OCI-LY7 (cell line): ENCODE measurements at regions of chr10 and their contacts with region 1.

Region 1: GRCh38 chr10:11611248-11612020 is at the start of gene USP6NL:
- DNase-seq: peak; percentile 90
- H3K4me3 ChIP-seq: peak within 1 kb of the TSS; percentile 81
- H3K27ac ChIP-seq: peak within 1 kb of the TSS; percentile 84
- H3K4me1 ChIP-seq: peaks cover 48% of the 10 kb centered on the region
- CTCF ChIP-seq: no peak
- total RNA-seq, gene USP6NL: 33.7 and 41.7 TPM in 2 replicates

Region 2: DNA sequence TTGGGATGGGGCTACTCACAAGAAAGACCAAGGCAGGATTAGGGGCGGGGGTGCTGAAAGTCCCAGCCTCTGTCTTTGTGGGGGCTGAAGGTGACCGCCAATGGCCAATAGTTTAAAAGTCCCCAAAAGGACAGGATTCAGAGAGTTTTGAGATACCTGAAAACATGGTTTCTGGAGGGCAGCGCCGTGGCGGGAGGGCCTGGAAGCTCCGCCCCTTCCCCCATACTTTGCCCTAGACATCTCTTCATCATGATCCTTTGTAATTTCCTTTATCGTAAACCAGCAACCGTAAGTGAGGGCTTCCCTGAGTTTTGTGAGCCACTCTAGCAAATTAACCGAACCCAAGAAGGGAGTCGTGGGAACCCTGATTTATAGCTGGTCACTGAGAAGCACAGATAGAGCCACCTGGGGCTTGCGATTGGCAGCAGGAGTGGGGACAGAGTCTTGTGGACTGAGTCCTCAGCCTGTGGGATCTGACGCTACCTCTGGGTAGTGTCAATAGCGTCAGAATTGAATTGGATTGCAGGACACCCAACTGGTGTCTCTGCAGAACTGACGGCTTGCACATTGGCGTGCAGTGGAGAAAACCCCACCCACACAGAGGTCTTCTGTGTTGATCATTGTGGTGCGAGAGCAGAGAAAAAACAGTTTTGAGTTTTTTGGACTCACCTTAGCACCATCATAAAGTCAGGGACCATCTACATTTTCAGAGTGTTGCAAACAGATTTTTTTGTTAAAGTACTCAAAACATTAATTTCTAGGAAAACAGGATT is 169.2 kb before region 1 on chr10:
- CTCF ChIA-PET with region 1: no interaction called
- POLR2A ChIA-PET with region 1: no interaction called
- intact Hi-C with region 1: no loop called
- DNase-seq: no peak
- H3K4me3 ChIP-seq: no peak overlapping the region
- H3K27ac ChIP-seq: no peak overlapping the region
- H3K4me1 ChIP-seq: peaks cover 17% of the 10 kb centered on the region
- CTCF ChIP-seq: no peak

Region 3: DNA sequence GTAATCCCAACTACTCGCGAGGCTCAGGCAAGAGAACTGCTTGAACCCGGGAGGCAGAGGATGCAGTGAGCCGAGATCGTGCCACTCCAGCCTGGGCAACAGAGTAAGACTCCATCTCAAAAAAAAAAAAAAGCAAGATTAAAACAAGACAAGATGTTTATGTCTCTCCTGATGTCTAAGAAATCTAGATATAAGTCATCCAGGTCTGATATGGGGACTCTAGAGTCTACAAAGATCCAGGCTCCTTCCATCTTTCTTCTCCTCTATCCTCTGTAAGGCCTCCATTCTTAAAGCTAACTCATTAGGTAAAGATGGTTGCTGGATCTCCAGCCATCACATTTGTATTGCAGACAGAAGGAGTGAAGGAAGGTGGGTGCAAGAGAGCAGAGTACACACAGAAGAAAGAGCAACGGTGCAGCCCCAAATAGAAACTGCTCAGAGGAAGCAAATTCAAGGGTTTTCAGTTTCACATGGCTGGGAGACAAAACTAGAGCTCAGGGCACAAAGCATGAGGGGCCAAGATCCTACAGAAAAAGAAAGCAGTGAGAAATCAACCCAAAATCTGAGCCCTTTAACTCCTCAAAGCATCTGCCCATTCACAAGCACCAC is 57.6 kb before region 1 on chr10:
- CTCF ChIA-PET with region 1: interaction called, 4 read pairs
- POLR2A ChIA-PET with region 1: interaction called, 18 read pairs
- intact Hi-C with region 1: loop called (anchors 2 kb)
- DNase-seq: peak; percentile 82
- H3K4me3 ChIP-seq: peak overlapping the region; percentile 56
- H3K27ac ChIP-seq: peak overlapping the region; percentile 90
- H3K4me1 ChIP-seq: peaks cover 74% of the 10 kb centered on the region
- CTCF ChIP-seq: no peak

Region 4: DNA sequence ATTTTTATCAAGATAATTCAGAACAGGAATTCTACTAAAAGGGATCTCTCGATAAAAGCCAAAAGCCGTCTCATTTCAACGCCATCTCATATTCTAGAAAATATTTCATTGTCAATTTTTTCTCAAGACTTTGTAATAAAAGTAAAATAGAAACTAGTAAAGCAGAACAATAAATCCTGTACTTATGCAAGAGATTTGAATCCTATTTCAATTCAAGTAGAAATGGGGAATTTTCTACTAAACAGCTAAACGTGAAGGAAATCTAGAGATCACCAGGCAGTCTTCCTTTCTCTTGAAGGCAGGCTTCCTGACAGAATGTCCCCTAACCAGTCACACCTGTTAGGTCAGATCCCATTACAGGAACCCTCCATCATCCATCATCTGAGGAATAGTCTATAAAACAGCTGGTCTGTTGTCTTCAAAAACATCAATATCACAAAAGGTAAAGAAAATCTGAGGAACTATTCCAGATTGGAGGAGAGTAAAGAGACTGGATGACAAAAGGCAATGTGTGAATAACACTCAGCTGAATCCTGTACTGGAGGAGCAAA is 23.6 kb before region 1 on chr10:
- CTCF ChIA-PET with region 1: no interaction called
- POLR2A ChIA-PET with region 1: interaction called, 19 read pairs
- intact Hi-C with region 1: no loop called
- DNase-seq: no peak
- H3K4me3 ChIP-seq: no peak overlapping the region
- H3K27ac ChIP-seq: no peak overlapping the region
- H3K4me1 ChIP-seq: peaks cover 21% of the 10 kb centered on the region
- CTCF ChIP-seq: no peak

Region 5: DNA sequence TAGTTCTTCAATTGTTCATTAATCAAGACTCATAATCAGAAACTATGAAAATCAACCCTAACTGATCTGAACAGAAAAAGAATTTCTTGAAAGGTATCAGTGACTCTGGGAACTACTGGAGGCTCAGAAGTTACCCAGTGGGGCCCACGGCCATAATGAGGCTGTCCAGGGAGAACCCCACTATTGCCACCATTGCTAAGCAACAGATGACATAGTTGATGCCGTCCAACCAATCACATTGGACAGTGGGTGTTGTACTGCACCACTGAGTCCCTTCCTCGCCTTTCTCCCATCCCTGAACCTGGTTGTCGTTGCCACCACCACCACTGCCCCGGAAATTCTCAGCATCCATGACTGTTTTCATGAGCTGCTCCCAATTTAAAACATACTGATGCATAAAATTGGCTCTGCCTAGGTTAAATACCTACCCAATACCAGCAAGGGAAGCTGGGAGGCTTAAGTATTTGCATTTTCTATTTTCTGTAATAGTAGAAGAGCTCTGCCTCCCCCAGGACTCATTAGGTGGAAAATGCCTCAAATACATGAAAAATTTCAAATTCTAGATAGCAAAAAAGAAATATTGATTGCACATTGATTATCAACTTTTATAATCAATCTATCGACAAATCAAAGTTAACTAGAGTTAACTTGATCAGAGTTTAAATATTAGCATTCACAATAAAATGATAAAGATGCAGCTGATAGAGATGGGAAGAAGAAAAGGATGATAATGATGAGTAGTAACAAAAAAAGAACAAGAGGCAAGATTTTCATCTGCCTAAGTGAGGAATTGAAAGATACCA is 26.8 kb after region 1 on chr10:
- CTCF ChIA-PET with region 1: no interaction called
- POLR2A ChIA-PET with region 1: interaction called, 10 read pairs
- intact Hi-C with region 1: no loop called
- DNase-seq: peak; percentile 48
- H3K4me3 ChIP-seq: no peak overlapping the region
- H3K27ac ChIP-seq: no peak overlapping the region
- H3K4me1 ChIP-seq: peaks cover 34% of the 10 kb centered on the region
- CTCF ChIP-seq: no peak

Region 6: GRCh38 chr10:11684717-11685645 is 73.5 kb after region 1 on chr10:
- CTCF ChIA-PET with region 1: interaction called, 7 read pairs
- POLR2A ChIA-PET with region 1: interaction called, 38 read pairs
- intact Hi-C with region 1: loop called (anchors 1 kb)
- DNase-seq: peak; percentile 96
- H3K4me3 ChIP-seq: peak overlapping the region; percentile 66
- H3K27ac ChIP-seq: peak overlapping the region; percentile 100
- H3K4me1 ChIP-seq: peaks cover 89% of the 10 kb centered on the region
- CTCF ChIP-seq: no peak